MCF 10A (cell line): ENCODE measurements at regions of chr17 and their contacts with region 1.

Region 1: DNA sequence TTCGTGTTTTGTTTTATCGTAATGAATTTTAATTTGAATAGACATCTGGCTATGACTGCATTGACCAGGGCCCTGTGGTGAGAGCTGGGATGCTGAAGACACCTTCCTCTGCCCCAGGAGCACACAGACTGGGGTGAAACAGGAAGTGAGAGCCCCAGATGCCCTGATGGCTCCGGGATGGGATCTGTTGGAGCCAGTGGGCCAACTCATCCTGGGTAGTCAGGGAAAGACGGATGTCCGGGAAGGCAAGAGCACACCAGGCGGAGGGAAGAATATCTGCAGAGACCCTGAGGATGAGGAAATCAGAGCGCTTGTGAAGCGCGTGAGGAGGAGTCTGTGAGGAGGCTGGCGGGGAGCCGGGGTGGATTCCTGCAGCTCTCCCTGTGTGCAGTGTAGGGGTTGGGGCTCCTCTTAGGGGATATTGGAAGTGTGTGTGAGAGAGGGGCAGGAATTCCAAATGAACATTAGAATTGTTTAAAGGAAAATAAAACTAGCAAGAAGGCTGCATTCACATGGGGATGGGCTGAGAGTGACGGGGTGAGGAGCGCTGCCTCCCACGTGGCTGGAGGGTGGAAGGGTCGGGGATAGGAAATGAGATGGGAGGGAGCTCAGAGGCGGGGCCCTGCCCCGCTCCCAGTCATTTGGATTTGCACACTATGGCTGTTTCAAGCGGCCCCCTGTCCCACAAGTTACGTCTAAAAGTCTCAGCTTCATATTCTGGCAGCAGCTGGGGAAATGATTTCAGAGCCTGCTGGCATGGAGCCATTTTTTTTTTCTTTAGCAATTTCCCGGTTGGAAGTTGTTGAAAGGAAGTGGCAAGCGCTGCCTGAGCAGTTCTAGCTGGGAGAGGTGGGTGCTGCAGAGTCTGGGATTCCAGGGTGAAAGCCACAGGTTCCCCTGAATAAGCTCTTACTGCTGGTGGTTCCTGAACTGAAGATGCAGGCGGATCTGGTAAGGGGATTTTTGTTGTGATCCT is 71.2 kb upstream of the LGALS9 start:
- DNase-seq: peak; percentile 90
- H3K4me3 Mint-ChIP-seq: no peak overlapping the region
- H3K27ac Mint-ChIP-seq: no peak overlapping the region
- H3K4me1 Mint-ChIP-seq: peaks cover 24% of the 10 kb centered on the region
- H3K27me3 Mint-ChIP-seq: no peaks in the 10 kb centered on the region
- CTCF ChIP-seq: no peak

Region 2: DNA sequence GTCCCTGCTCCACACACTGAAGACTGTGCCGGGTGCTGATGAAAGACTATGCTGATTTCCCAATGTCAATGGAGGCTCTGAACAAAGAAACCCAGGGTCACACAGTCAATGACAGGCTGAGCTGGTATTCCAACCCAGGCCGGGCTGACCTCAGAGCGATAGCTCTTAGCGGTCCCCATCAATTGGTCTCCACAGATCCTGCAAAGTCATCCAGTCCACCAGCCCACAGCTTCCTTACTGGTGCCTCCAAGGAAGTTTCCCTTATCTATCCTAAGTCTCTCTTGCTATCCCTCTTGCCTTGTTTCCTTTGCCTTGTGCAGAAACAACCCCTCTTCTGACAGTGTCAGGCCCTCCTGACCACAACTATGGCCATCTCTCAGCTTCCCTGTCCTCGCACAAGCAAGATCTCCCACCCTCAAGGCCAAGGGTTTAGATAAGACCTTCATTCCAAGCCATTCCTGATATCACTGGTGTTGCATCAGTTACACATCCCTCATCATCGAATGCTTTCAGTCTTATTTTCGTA is 156.3 kb before region 1 on chr17:
- CTCF ChIA-PET with region 1: no interaction called
- POLR2A ChIA-PET with region 1: no interaction called
- intact Hi-C with region 1: no loop called
- DNase-seq: no peak
- H3K4me3 Mint-ChIP-seq: no peak overlapping the region
- H3K27ac Mint-ChIP-seq: no peak overlapping the region
- H3K4me1 Mint-ChIP-seq: peaks cover 12% of the 10 kb centered on the region
- H3K27me3 Mint-ChIP-seq: no peaks in the 10 kb centered on the region
- CTCF ChIP-seq: no peak

Region 3: DNA sequence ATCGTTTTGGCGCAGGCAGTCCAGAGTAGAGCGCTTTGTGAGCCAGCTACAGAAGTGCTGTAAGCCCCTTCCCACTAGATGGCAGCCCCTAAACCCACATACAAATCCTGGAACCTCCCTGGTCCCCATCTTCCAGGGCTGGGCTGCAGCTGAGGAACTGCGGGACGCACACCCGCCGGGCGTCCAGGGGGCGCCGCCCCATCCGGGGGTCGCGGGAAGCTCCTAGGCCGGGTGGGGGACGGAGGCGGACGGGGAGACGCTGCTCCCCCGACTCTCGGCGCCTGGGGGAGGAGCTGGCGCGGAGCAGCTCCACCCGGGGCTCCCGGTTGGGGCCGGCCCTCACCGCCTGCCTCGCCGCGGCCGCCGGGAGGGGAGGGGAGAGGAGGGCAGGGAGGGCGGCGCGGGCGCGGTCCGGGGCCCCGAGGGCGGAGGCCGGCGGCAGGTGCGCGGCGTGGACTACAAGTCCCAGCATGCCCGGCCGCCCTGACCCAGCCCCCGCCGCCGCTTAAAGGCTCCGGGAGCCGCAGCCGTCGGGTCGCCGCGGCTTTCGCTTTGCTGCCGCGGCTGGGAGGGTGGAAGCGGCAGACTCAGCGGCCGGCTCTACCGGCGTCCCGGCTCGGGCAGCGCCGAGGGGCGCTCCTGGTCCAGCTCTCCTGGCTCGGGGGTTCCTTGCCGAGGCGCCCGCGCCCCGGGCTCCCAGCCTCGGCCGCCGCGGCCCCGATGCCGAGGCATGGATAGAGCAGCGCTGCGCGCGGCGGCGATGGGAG is 103.7 kb before region 1 on chr17 and contains the start of gene KSR1:
- CTCF ChIA-PET with region 1: no interaction called
- POLR2A ChIA-PET with region 1: no interaction called
- intact Hi-C with region 1: loop called (anchors 10 kb)
- DNase-seq: peak; percentile 67
- H3K4me3 Mint-ChIP-seq: peak within 1 kb of the TSS; percentile 75
- H3K27ac Mint-ChIP-seq: no peak within 1 kb of the TSS
- H3K4me1 Mint-ChIP-seq: no peaks in the 10 kb centered on the region
- H3K27me3 Mint-ChIP-seq: peaks cover 24% of the 10 kb centered on the region
- CTCF ChIP-seq: no peak
- total RNA-seq, gene KSR1: 7.2 and 10.2 TPM in 2 replicates

Region 4: GRCh38 chr17:27578718-27579085 is 18.9 kb after region 1 on chr17:
- CTCF ChIA-PET with region 1: interaction called, 10 read pairs
- POLR2A ChIA-PET with region 1: no interaction called
- intact Hi-C with region 1: no loop called
- DNase-seq: peak; percentile 69
- H3K4me3 Mint-ChIP-seq: no peak overlapping the region
- H3K27ac Mint-ChIP-seq: no peak overlapping the region
- H3K4me1 Mint-ChIP-seq: peaks cover 41% of the 10 kb centered on the region
- H3K27me3 Mint-ChIP-seq: no peaks in the 10 kb centered on the region
- CTCF ChIP-seq: no peak